ENCODE measurements at regions of chr2 and their contacts with region 1.

Region 1: GRCh38 chr2:237904801-237905599 is 45.6 kb downstream of the RAMP1 start:
- DNase-seq: peak; percentile 42 to 85 (median 76)
- H3K4me3 ChIP-seq: peak overlapping the region in 1 of 7 experiments; percentile 48
- H3K27ac ChIP-seq: peak overlapping the region; percentile 52 to 64
- H3K4me1 ChIP-seq: peaks cover 5 to 52% (median 35%) of the 10 kb centered on the region in 4 experiments
- H3K27me3 ChIP-seq: no peaks in the 10 kb centered on the region

Region 2: DNA sequence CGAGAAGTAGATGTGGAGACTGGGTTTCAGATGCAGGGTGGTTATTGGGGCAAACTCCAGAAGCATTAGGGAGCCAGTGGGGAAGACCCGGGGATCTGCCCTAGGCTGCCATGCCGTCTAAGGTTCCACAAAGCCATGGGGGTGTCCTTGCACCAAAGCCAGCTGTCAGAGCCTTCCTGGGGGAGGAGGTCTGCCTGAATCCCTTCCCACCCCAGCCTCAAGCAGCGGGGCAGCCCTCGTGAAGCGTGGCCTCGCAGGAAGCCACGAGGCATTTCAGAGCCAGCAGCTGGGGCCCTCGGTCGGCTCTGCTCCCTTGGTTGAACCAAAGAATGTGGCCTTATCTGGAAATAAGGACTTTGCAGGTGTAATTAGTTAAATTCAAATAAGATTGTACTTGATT is 10.6 kb after region 1 on chr2:
- CTCF ChIA-PET with region 1: interaction called, 10 read pairs
- POLR2A ChIA-PET with region 1: no interaction called
- DNase-seq: no peak
- H3K4me3 ChIP-seq: no peak overlapping the region
- H3K27ac ChIP-seq: no peak overlapping the region
- H3K4me1 ChIP-seq: peaks cover 4 to 17% (median 14%) of the 10 kb centered on the region in 4 experiments
- H3K27me3 ChIP-seq: no peaks in the 10 kb centered on the region

Region 3: DNA sequence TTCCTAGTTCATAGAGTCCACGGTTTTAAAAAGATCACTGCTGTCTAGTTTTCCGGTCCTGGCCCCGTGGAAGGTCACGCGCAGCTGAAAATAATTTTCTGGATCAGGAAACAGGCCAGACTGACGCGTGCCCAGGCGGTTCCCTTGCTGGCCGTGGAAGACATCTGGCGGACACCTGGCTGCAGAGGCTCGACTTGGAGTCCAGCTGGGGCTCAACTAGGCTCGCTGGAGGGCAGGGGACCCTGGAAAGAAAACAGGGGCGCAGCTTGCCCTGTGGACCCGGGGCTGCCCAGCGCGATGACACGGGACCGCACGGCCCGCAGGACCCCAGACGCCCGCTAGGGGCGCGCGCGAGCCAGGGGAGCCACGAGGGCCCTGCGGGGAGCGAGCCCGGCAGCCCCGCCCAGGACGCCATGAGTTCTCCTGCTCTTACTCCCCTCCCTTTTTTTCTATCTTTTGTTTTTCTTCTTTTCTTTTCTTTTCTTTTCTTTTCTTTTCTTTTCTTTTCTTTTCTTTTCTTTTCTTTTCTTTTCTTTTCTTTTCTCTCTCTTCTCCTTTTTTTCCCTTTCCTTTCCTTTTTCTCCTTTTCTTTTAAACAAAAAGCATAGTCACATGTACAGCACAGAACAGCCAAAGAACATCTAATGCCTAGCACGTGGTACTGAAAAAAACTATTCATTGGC is 18.6 kb after region 1 on chr2:
- CTCF ChIA-PET with region 1: interaction called, 14 read pairs
- POLR2A ChIA-PET with region 1: no interaction called
- DNase-seq: peak; percentile 61 to 78 (median 76)
- H3K4me3 ChIP-seq: peak overlapping the region in 6 of 7 experiments; percentile 35 to 79 (median 56)
- H3K27ac ChIP-seq: no peak overlapping the region
- H3K4me1 ChIP-seq: peaks cover 4 to 37% (median 30%) of the 10 kb centered on the region in 4 experiments
- H3K27me3 ChIP-seq: no peaks in the 10 kb centered on the region

Region 4: DNA sequence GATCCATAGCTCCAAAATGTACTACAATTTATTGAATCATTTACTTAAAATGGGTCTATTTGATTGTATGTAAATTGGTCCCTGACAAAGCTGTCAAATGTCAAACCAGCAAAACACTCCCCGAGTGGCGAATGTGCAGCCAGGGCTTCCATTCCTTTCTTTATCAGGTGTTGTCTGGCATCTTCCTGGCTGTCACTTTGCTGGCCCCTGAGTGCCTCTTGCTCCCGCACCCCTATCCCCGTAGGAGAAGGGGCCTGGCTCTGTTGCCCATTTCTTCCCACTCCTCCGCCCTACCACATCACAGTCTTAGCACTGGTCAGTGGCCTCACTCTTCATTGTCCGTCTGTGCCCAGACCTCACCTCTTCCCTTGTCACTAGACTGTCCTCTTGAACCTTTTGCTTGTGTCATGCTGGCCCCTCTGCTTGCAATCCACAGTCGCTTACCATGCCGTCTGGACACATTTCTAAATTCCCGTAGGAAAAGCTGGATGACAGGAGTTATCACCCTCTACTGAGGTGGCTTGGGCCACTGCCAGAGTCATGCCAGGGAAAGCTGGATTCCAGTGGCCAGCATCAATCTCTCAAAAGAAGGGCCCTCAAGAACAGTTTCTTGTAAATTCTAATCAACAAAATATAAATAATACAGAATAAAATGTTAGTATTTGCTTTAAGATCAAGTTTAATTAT is 77.2 kb after region 1 on chr2:
- CTCF ChIA-PET with region 1: no interaction called
- POLR2A ChIA-PET with region 1: no interaction called
- DNase-seq: no peak
- H3K4me3 ChIP-seq: no peak overlapping the region
- H3K27ac ChIP-seq: no peak overlapping the region
- H3K4me1 ChIP-seq: peaks cover 16 to 69% (median 42%) of the 10 kb centered on the region in 4 experiments
- H3K27me3 ChIP-seq: no peaks in the 10 kb centered on the region